ENCODE measurements at regions of chr3 and their contacts with region 1.

Region 1: DNA sequence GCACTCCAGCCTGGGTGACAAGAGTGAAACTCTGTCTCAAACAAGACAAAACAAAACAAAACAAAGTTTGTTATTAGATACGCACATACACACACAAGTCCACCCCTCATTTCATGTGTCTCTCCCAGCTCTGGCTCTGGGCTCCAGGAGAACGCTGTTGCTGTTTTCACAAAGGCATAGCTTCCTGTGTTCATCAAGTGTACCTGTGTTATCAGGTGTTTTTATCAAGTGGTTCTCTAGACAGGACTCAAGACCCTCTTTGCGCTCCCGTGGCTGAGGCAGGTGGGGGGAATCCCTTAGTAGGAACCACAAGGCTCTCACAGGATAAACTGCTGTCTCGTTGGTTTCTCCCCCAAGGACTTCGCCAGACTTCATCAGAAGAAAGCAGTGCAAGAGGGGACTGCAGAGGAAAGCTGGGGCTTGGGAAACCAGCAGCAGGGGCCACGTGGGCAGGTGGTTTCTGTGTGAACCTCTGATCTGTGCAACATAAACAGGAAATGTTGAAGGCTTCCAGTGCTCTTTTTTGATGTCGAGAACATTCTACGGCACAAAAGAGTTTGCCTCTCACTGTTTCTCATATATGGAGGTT is 6.9 kb upstream of the PPP1R2 start:
- DNase-seq: peak; percentile 66 to 95 (median 87)
- ATAC-seq: peak; percentile 78
- H3K4me3 ChIP-seq: peak overlapping the region; percentile 37 to 56
- H3K4me3 Mint-ChIP-seq: peak overlapping the region; percentile 82
- H3K27ac ChIP-seq: peak overlapping the region; percentile 83 to 87
- H3K27ac Mint-ChIP-seq: peak overlapping the region; percentile 97
- H3K4me1 ChIP-seq: peaks cover 77% of the 10 kb centered on the region
- H3K4me1 Mint-ChIP-seq: peaks cover 82% of the 10 kb centered on the region
- H3K27me3 ChIP-seq: no peaks in the 10 kb centered on the region
- H3K27me3 Mint-ChIP-seq: no peaks in the 10 kb centered on the region
- CTCF ChIP-seq: no peak

Region 2: GRCh38 chr3:195522254-195523023 is 27.6 kb before region 1 on chr3:
- CTCF ChIA-PET with region 1: interaction called, 18 read pairs
- POLR2A ChIA-PET with region 1: interaction called, 4 read pairs
- intact Hi-C with region 1: no loop called
- DNase-seq: peak in 3 of 9 experiments; percentile 52 to 65 (median 56)
- ATAC-seq: peak; percentile 30
- H3K4me3 ChIP-seq: no peak overlapping the region
- H3K4me3 Mint-ChIP-seq: no peak overlapping the region
- H3K27ac ChIP-seq: no peak overlapping the region
- H3K27ac Mint-ChIP-seq: peak overlapping the region; percentile 75
- H3K4me1 ChIP-seq: peaks cover 35% of the 10 kb centered on the region
- H3K4me1 Mint-ChIP-seq: peaks cover 46% of the 10 kb centered on the region
- H3K27me3 ChIP-seq: no peaks in the 10 kb centered on the region
- H3K27me3 Mint-ChIP-seq: no peaks in the 10 kb centered on the region
- CTCF ChIP-seq: peak; percentile 93

Region 3: DNA sequence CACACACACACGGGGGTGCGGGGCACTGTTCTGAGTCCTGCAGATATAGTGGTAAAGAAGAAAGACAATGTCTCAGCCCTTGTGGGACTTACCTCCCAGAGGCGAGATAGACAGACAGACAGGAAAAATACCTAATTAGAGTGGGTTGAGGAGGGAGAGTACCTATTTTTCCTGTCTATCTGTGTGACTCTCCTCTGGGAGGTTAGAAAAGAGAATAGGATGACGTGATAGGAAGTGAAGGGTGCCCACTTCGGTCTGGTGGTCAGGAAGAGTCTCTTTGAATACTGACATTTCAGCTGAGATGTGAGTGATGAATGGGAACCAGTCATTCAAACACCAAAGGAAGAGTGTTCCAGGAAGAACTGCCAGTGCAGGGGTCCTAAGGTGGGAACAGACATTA is 37.8 kb after region 1 on chr3:
- CTCF ChIA-PET with region 1: interaction called, 3 read pairs
- POLR2A ChIA-PET with region 1: no interaction called
- intact Hi-C with region 1: loop called in 1 of 2 experiments (anchors 5 kb)
- DNase-seq: peak in 1 of 9 experiments; percentile 13
- ATAC-seq: no peak
- H3K4me3 ChIP-seq: no peak overlapping the region
- H3K4me3 Mint-ChIP-seq: no peak overlapping the region
- H3K27ac ChIP-seq: no peak overlapping the region
- H3K27ac Mint-ChIP-seq: no peak overlapping the region
- H3K4me1 ChIP-seq: peaks cover 27% of the 10 kb centered on the region
- H3K4me1 Mint-ChIP-seq: peaks cover 5% of the 10 kb centered on the region
- H3K27me3 ChIP-seq: no peaks in the 10 kb centered on the region
- H3K27me3 Mint-ChIP-seq: no peaks in the 10 kb centered on the region
- CTCF ChIP-seq: no peak

Region 4: DNA sequence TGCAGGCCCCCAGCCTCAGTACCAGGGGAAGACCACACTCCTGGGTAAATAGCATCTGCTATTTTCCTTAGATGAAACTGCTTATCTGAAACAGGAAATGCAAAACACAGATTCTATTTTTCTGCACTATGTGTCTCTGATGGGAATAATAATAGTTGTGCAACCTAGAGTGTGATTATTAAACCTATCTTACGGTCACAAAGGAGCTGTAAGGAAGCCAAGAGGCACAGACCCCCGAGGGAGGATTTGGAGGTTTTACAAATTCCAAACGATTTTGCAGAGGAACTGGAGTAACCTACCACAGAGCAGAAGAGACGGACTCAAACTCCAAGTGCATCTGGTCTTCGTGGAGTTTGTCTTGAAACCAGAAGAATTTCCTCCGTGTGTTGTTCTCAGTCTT is 47.8 kb after region 1 on chr3:
- CTCF ChIA-PET with region 1: no interaction called
- POLR2A ChIA-PET with region 1: no interaction called
- intact Hi-C with region 1: no loop called
- DNase-seq: no peak
- ATAC-seq: no peak
- H3K4me3 ChIP-seq: no peak overlapping the region
- H3K4me3 Mint-ChIP-seq: no peak overlapping the region
- H3K27ac ChIP-seq: no peak overlapping the region
- H3K27ac Mint-ChIP-seq: no peak overlapping the region
- H3K4me1 ChIP-seq: no peaks in the 10 kb centered on the region
- H3K4me1 Mint-ChIP-seq: no peaks in the 10 kb centered on the region
- H3K27me3 ChIP-seq: no peaks in the 10 kb centered on the region
- H3K27me3 Mint-ChIP-seq: no peaks in the 10 kb centered on the region
- CTCF ChIP-seq: no peak

Region 5: DNA sequence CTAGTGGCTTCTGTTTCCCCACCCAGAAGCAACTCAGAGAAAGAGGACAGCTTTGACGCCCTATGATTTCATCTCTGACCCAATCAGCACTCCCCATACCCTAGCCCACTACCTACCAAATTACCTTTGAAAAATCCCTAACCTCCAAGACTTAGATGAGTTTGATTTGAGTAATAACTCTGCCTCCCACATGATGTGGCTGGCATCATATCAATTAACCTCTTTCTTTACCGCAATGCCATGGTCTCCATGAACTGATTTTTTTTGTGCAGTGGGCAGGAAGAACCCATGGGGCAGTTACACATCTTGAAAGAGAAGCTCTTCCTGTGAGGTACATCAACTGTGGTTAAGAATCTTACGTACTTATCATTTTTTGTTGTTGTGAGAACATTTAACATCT is 59.2 kb after region 1 on chr3:
- CTCF ChIA-PET with region 1: interaction called, 4 read pairs
- POLR2A ChIA-PET with region 1: interaction called, 13 read pairs
- intact Hi-C with region 1: loop called in 1 of 2 experiments (anchors 5 kb)
- DNase-seq: peak in 5 of 9 experiments; percentile 34 to 88 (median 69)
- ATAC-seq: peak; percentile 88
- H3K4me3 ChIP-seq: no peak overlapping the region
- H3K4me3 Mint-ChIP-seq: peak overlapping the region; percentile 8
- H3K27ac ChIP-seq: peak overlapping the region in 1 of 2 experiments; percentile 13
- H3K27ac Mint-ChIP-seq: peak overlapping the region; percentile 74
- H3K4me1 ChIP-seq: peaks cover 28% of the 10 kb centered on the region
- H3K4me1 Mint-ChIP-seq: peaks cover 50% of the 10 kb centered on the region
- H3K27me3 ChIP-seq: no peaks in the 10 kb centered on the region
- H3K27me3 Mint-ChIP-seq: no peaks in the 10 kb centered on the region
- CTCF ChIP-seq: no peak

Region 6: DNA sequence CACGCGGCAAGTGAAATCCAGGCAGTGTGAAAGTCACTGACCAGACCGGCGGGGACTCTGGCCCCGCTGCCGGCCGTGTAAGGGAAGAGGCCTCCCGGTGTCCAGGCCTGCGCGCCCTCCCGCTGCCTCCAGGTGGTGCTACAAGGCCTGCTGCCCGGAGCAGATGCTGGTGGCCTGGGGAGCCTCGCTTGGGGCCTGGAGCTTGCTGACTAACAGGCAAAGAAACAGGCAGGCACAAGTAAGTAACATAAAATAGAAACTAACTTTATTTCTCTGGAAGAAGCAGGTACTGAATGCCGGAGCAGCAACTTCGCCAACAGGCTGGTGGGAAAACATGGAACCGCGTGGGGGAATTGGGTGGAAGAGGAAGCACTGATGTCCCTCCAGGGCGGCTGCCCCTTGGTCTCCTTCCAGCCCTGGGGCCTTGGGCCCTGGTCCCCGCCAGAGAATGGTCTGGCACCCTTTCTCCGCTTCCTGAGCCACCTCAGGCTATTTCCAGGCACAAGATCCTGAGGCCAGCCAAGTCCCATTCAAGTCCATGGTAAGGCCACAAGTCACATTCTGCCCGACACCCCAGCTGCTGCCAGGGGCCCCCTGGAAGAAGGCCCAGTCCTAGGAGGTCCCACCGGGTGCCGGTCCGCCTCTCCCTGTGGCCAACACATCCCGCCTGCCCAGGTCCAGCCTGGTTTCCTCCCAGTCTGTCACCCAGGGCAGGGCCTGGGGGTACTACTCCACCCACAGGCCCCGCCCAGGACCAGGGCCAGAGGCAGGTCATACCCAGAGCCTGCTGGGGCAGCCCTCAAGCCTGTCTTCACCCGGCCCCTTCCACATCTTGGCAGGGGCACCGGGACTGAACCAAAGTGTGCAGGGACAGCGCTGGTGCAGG is 313.3 kb after region 1 on chr3:
- CTCF ChIA-PET with region 1: no interaction called
- POLR2A ChIA-PET with region 1: no interaction called
- intact Hi-C with region 1: no loop called
- DNase-seq: peak; percentile 36 to 77 (median 66)
- ATAC-seq: peak; percentile 78
- H3K4me3 ChIP-seq: no peak overlapping the region
- H3K4me3 Mint-ChIP-seq: no peak overlapping the region
- H3K27ac ChIP-seq: no peak overlapping the region
- H3K27ac Mint-ChIP-seq: no peak overlapping the region
- H3K4me1 ChIP-seq: peaks cover 4% of the 10 kb centered on the region
- H3K4me1 Mint-ChIP-seq: peaks cover 4% of the 10 kb centered on the region
- H3K27me3 ChIP-seq: no peaks in the 10 kb centered on the region
- H3K27me3 Mint-ChIP-seq: no peaks in the 10 kb centered on the region
- CTCF ChIP-seq: peak; percentile 57